ENCODE measurements at regions of chr5 and their contacts with region 1.

Region 1: DNA sequence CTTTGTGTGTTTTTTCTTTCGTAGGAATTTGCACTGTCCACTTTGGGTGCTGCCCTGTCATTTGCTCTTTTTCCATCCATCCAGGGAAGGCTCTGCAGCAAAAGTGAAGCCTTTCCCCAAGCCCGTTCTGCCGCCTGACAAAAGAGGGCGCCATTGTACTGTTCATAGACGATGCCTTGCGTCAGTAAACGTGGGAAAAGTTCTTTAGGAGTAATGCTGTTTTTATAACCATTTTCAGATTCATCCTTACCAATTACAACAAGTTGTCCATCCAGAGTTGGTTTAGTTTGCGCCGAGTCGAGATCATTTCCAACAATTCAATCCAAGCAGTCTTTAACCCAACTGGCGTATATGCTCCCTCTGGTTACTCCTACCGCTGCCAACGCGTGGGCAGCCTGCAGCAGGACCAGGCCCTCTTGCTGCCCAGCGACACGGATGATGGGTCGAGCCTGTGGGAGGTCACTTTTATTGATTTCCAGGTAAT is 34.3 kb upstream of the RPS23 start:
- DNase-seq: peak; percentile 67
- H3K4me3 Mint-ChIP-seq: no peak overlapping the region
- H3K27ac Mint-ChIP-seq: no peak overlapping the region
- H3K4me1 Mint-ChIP-seq: no peaks in the 10 kb centered on the region
- H3K27me3 Mint-ChIP-seq: peaks cover 4% of the 10 kb centered on the region

Region 2: GRCh38 chr5:82494942-82495341 is 182.5 kb after region 1 on chr5:
- CTCF ChIA-PET with region 1: no interaction called
- intact Hi-C with region 1: loop called (anchors 1 kb)
- DNase-seq: no peak
- H3K4me3 Mint-ChIP-seq: no peak overlapping the region
- H3K27ac Mint-ChIP-seq: no peak overlapping the region
- H3K4me1 Mint-ChIP-seq: peaks cover 5% of the 10 kb centered on the region
- H3K27me3 Mint-ChIP-seq: peaks cover 9% of the 10 kb centered on the region

Region 3: GRCh38 chr5:82641331-82642003 is 329.1 kb after region 1 on chr5:
- CTCF ChIA-PET with region 1: interaction called, 5 read pairs
- intact Hi-C with region 1: loop called (anchors 2 kb)
- DNase-seq: peak; percentile 34
- H3K4me3 Mint-ChIP-seq: no peak overlapping the region
- H3K27ac Mint-ChIP-seq: no peak overlapping the region
- H3K4me1 Mint-ChIP-seq: no peaks in the 10 kb centered on the region
- H3K27me3 Mint-ChIP-seq: no peaks in the 10 kb centered on the region

Region 4: GRCh38 chr5:83430130-83431010 is 1118.0 kb after region 1 on chr5:
- CTCF ChIA-PET with region 1: interaction called, 3 read pairs
- intact Hi-C with region 1: loop called (anchors 2 kb)
- DNase-seq: peak; percentile 76
- H3K4me3 Mint-ChIP-seq: no peak overlapping the region
- H3K27ac Mint-ChIP-seq: no peak overlapping the region
- H3K4me1 Mint-ChIP-seq: no peaks in the 10 kb centered on the region
- H3K27me3 Mint-ChIP-seq: no peaks in the 10 kb centered on the region

Measured in activated naive CD4-positive, alpha-beta T cell treated with anti-CD3 and anti-CD28 coated beads for 36 hours (primary cell).